Endothelial cell of umbilical vein (primary cell): ENCODE measurements at regions of chr16 and their contacts with region 1.

Region 1: GRCh38 chr16:56700195-56700594 is 17.9 kb downstream of the MT1X start:
- DNase-seq: no peak
- H3K4me3 ChIP-seq: no peak overlapping the region
- H3K27ac ChIP-seq: no peak overlapping the region
- H3K4me1 ChIP-seq: no peaks in the 10 kb centered on the region
- H3K27me3 ChIP-seq: no peaks in the 10 kb centered on the region
- CTCF ChIP-seq: no peak
- POLR2A ChIP-seq: no peak

Region 2: GRCh38 chr16:56356276-56357240 is 343.6 kb before region 1 on chr16:
- CTCF ChIA-PET with region 1: interaction called, 11 read pairs
- POLR2A ChIA-PET with region 1: no interaction called
- dilution Hi-C with region 1: no loop called
- intact Hi-C with region 1: no loop called
- DNase-seq: peak; percentile 88
- H3K4me3 ChIP-seq: peak overlapping the region; percentile 22 to 60 (median 56)
- H3K27ac ChIP-seq: peak overlapping the region; percentile 87
- H3K4me1 ChIP-seq: peaks cover 14% of the 10 kb centered on the region
- H3K27me3 ChIP-seq: peaks cover 0 to 3% of the 10 kb centered on the region in 2 experiments
- CTCF ChIP-seq: peak; percentile 92 to 93
- POLR2A ChIP-seq: no peak

Region 3: GRCh38 chr16:56519459-56520250 is 180.5 kb before region 1 on chr16 and contains the start of gene BBS2:
- CTCF ChIA-PET with region 1: interaction called, 54 read pairs
- POLR2A ChIA-PET with region 1: no interaction called
- dilution Hi-C with region 1: no loop called
- intact Hi-C with region 1: loop called (anchors 1 kb)
- DNase-seq: peak; percentile 89
- H3K4me3 ChIP-seq: peak within 1 kb of the TSS; percentile 61 to 89 (median 76)
- H3K27ac ChIP-seq: peak within 1 kb of the TSS; percentile 13
- H3K4me1 ChIP-seq: peaks cover 13% of the 10 kb centered on the region
- H3K27me3 ChIP-seq: no peaks in the 10 kb centered on the region
- CTCF ChIP-seq: no peak
- POLR2A ChIP-seq: peak; percentile 89
- total RNA-seq, gene BBS2: 33.3 and 44.8 TPM in 2 replicates

Region 4: DNA sequence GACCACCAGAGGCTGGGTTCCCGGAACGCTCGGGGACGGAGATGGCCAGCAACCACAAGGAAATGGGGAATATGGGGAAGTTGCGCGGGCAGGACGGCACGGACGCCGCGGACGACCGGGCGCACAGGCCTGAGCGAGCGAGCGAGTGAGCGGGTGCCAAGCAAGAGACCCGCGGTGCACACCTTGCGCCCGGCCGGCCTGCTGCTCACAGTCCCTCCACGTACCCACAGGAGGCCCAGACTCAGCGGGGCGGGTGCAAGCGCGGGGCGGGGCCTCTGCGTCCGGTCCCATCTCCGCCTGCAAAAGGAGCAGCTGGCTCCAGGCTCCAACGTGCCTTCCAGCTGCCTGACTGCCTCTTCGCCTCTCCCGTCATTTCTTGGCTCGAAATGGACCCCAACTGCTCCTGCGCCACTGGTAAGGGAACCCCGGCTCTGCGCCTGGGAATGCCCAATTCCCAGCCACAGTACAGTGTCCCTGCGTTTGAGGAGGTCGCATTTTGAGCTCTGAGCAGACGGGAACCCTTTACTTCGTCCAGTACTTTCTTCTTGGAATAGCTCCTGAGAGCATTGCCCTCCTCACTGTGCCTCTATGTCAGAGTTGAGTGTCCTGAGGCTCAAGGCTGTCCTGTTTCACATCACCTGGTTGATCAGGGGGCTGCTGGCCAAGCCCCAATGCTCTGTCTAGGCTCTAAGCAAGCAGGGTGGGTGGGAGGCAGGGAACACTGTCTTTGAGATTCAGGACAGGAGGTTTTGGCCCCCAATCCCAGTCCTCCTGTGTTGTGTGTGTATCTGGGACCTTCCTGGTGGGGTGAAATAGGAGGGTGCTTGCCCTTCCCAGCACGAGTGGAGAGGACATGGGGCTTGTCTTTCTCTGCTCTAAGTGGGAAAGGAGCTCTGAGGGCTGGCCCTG is 82.8 kb before region 1 on chr16:
- CTCF ChIA-PET with region 1: interaction called, 10 read pairs
- POLR2A ChIA-PET with region 1: interaction called, 3 read pairs
- dilution Hi-C with region 1: no loop called
- intact Hi-C with region 1: no loop called
- DNase-seq: no peak
- H3K4me3 ChIP-seq: peak overlapping the region; percentile 31 to 63 (median 41)
- H3K27ac ChIP-seq: peak overlapping the region; percentile 59
- H3K4me1 ChIP-seq: peaks cover 53% of the 10 kb centered on the region
- H3K27me3 ChIP-seq: no peaks in the 10 kb centered on the region
- CTCF ChIP-seq: no peak
- POLR2A ChIP-seq: peak; percentile 61

Region 5: GRCh38 chr16:56673921-56674320 is 26.3 kb before region 1 on chr16:
- CTCF ChIA-PET with region 1: interaction called, 24 read pairs
- POLR2A ChIA-PET with region 1: no interaction called
- dilution Hi-C with region 1: no loop called
- intact Hi-C with region 1: loop called (anchors 1 kb)
- DNase-seq: peak; percentile 18
- H3K4me3 ChIP-seq: no peak overlapping the region
- H3K27ac ChIP-seq: no peak overlapping the region
- H3K4me1 ChIP-seq: peaks cover 3% of the 10 kb centered on the region
- H3K27me3 ChIP-seq: peaks cover 48 to 59% of the 10 kb centered on the region in 2 experiments
- CTCF ChIP-seq: peak; percentile 22 to 59
- POLR2A ChIP-seq: no peak

Region 6: DNA sequence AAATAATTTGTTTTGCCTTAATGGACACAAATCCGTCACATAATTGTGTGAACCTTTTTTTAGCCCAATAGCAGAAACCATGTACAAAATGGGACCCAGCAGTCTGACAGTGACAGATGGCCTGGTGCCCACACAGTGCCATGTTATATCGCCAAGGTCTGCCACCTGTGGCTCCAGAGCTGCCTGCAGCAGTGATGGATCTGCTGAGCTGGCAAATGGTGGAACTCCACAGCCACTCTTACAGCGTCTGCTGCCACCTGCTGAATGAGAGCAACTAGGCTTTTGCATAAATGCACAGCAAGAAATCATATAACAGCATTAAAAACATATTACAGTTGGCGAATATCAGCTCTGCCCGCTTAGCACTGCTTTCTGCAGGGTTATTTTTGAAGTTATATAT is 89.2 kb after region 1 on chr16:
- CTCF ChIA-PET with region 1: interaction called, 20 read pairs
- POLR2A ChIA-PET with region 1: no interaction called
- dilution Hi-C with region 1: no loop called
- intact Hi-C with region 1: no loop called
- DNase-seq: peak; percentile 55
- H3K4me3 ChIP-seq: no peak overlapping the region
- H3K27ac ChIP-seq: no peak overlapping the region
- H3K4me1 ChIP-seq: peaks cover 4% of the 10 kb centered on the region
- H3K27me3 ChIP-seq: no peaks in the 10 kb centered on the region
- CTCF ChIP-seq: peak; percentile 6 to 53
- POLR2A ChIP-seq: no peak

Region 7: DNA sequence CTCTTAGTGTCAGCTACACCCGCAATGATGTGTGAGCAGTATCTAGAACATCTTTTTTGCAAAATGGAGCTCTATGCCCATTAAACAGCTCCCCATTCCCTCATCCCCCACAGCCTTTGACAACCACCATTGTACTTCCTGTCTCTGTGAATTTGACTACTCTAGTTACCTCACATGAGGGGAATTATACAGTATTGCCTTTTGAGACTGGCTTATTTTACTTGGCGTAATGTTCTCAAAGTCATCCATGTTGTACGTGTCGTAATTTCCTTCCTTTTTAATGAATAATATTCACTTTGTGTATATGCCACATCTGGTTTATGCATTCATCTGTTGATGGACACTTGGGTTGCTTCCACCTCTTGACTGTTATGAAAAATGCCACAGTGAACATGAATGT is 635.2 kb after region 1 on chr16:
- CTCF ChIA-PET with region 1: no interaction called
- POLR2A ChIA-PET with region 1: no interaction called
- dilution Hi-C with region 1: no loop called
- intact Hi-C with region 1: no loop called
- DNase-seq: peak; percentile 74
- H3K4me3 ChIP-seq: no peak overlapping the region
- H3K27ac ChIP-seq: peak overlapping the region; percentile 59
- H3K4me1 ChIP-seq: peaks cover 10% of the 10 kb centered on the region
- H3K27me3 ChIP-seq: peaks cover 2% of the 10 kb centered on the region in 2 experiments
- CTCF ChIP-seq: no peak
- POLR2A ChIP-seq: no peak